ENCODE measurements at regions of chr9 and their contacts with region 1.

Region 1: DNA sequence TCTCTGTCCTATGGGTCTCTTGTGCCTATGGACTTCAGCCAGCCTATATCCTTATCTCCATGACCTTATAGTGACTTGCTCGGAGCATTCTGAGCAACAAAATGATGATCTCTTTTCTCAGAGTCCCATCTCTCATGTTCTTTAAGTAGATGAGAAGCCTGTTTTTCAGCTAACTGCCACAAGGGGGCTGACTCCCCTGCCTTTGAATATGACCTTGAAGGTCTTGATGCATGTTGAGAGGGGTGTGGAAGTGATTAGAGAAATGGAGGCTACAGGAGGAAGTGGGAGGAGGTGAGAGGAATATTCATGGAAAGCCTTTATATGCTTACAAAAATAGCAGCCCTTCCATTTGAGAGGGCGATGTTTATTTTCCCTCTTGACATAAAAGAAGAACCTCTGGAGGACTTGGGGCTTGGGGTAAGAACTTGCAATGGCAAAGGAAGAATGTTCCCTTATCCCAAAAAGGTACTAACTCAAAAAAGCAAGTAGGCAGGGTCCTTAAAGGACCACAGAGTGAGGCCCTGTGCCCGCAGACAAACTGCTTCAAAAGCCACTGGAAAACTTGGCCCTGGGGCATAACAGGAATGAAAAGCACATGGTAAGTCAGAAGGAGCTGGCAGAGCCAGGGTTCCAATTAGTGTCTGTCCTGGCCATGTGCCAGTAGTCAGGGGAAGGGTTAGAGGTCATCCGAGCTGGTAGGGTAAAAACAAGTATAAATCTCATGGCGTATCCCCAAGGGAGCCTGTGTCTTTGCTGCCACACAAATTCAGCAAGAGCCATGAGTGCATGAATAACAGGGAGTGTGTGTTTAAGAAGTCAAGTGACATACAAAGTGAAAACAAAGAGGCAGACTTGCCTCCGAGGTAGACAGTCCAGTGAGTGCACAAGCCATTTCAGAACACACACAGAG is 39.1 kb downstream of the FGD3 start:
- DNase-seq: peak; percentile 26 to 52 (median 45)
- H3K4me3 ChIP-seq: no peak overlapping the region
- H3K27ac ChIP-seq: no peak overlapping the region
- H3K4me1 ChIP-seq: peaks cover 2 to 19% (median 4%) of the 10 kb centered on the region in 4 experiments
- H3K27me3 ChIP-seq: no peaks in the 10 kb centered on the region

Region 2: GRCh38 chr9:92728831-92729734 is 257.3 kb before region 1 on chr9:
- CTCF ChIA-PET with region 1: no interaction called
- POLR2A ChIA-PET with region 1: no interaction called
- DNase-seq: peak in 2 of 3 donors; percentile 45 to 50
- H3K4me3 ChIP-seq: no peak overlapping the region
- H3K27ac ChIP-seq: no peak overlapping the region
- H3K4me1 ChIP-seq: peaks cover 0 to 15% (median 5%) of the 10 kb centered on the region in 4 experiments
- H3K27me3 ChIP-seq: no peaks in the 10 kb centered on the region

Region 3: GRCh38 chr9:93446073-93446472 is 459.6 kb after region 1 on chr9:
- CTCF ChIA-PET with region 1: no interaction called
- POLR2A ChIA-PET with region 1: interaction called, 13 read pairs
- DNase-seq: no peak
- H3K4me3 ChIP-seq: no peak overlapping the region
- H3K27ac ChIP-seq: no peak overlapping the region
- H3K4me1 ChIP-seq: peaks cover 4 to 13% (median 8%) of the 10 kb centered on the region in 4 experiments
- H3K27me3 ChIP-seq: no peaks in the 10 kb centered on the region

Region 4: DNA sequence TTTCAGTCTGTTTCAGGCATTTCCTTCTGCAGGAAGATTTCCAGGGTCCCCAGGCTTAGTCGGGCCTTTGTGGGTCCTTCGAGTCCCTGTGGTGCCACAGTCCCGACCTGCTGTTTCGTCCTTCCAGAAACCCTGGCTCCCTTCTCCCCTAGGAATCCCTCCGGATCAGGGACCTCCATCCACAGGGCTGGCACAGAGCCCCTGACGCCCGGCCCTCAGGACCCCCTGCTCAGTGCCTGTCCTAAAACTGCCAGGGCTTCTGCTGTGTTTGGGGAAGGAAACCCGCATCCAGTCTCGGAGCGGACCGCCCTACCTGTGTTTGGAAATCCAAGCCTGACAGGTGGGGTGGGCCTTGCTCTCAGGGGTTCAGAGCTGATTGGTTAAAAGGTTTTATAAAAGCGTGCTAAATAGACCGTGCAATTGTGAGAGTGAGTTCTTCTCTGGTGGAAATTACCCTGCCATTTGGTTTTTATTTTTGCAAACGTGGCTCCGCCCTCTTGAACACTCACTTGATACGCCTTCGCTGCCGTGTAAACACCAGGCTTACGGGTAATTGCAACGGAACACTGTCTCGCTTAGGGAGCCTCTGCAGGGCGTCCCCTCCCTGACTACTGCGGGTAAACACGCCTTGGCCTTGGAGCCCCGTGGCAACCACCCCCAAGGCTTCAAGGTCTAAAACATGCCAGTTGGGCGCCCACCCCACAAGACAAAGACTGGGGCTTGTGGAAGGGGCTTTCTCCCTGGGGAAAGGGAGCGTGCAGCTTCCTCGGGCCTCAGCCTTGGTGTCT is 711.1 kb after region 1 on chr9:
- CTCF ChIA-PET with region 1: no interaction called
- POLR2A ChIA-PET with region 1: no interaction called
- DNase-seq: no peak
- H3K4me3 ChIP-seq: no peak overlapping the region
- H3K27ac ChIP-seq: no peak overlapping the region
- H3K4me1 ChIP-seq: no peaks in the 10 kb centered on the region
- H3K27me3 ChIP-seq: peaks cover 0 to 3% (median 2%) of the 10 kb centered on the region in 5 experiments